ENCODE measurements at regions of chr5 and their contacts with region 1.

Region 1: GRCh38 chr5:170216266-170216864 is 16.4 kb upstream of the C5orf58 start:
- DNase-seq: peak; percentile 73
- H3K4me3 ChIP-seq: no peak overlapping the region
- H3K27ac ChIP-seq: no peak overlapping the region
- H3K4me1 ChIP-seq: peaks cover 30% of the 10 kb centered on the region
- H3K27me3 ChIP-seq: no peaks in the 10 kb centered on the region
- CTCF ChIP-seq: peak; percentile 66 to 69
- POLR2A ChIP-seq: no peak

Region 2: GRCh38 chr5:169302491-169303118 is 913.8 kb before region 1 on chr5:
- CTCF ChIA-PET with region 1: interaction called, 3 read pairs
- POLR2A ChIA-PET with region 1: no interaction called
- dilution Hi-C with region 1: no loop called
- intact Hi-C with region 1: loop called (anchors 5 kb)
- DNase-seq: peak; percentile 85
- H3K4me3 ChIP-seq: no peak overlapping the region
- H3K27ac ChIP-seq: no peak overlapping the region
- H3K4me1 ChIP-seq: peaks cover 4% of the 10 kb centered on the region
- H3K27me3 ChIP-seq: peaks cover 21 to 36% of the 10 kb centered on the region in 2 experiments
- CTCF ChIP-seq: peak; percentile 90 to 93
- POLR2A ChIP-seq: no peak

Region 3: GRCh38 chr5:169650701-169651331 is 565.5 kb before region 1 on chr5:
- CTCF ChIA-PET with region 1: no interaction called
- POLR2A ChIA-PET with region 1: no interaction called
- dilution Hi-C with region 1: no loop called
- intact Hi-C with region 1: no loop called
- DNase-seq: peak; percentile 65
- H3K4me3 ChIP-seq: no peak overlapping the region
- H3K27ac ChIP-seq: peak overlapping the region; percentile 37
- H3K4me1 ChIP-seq: peaks cover 13% of the 10 kb centered on the region
- H3K27me3 ChIP-seq: no peaks in the 10 kb centered on the region
- CTCF ChIP-seq: no peak
- POLR2A ChIP-seq: no peak

Region 4: GRCh38 chr5:169850409-169850808 is 366.0 kb before region 1 on chr5:
- CTCF ChIA-PET with region 1: no interaction called
- POLR2A ChIA-PET with region 1: no interaction called
- dilution Hi-C with region 1: no loop called
- intact Hi-C with region 1: loop called (anchors 10 kb)
- DNase-seq: no peak
- H3K4me3 ChIP-seq: no peak overlapping the region
- H3K27ac ChIP-seq: no peak overlapping the region
- H3K4me1 ChIP-seq: no peaks in the 10 kb centered on the region
- H3K27me3 ChIP-seq: no peaks in the 10 kb centered on the region
- CTCF ChIP-seq: peak; percentile 9 to 13
- POLR2A ChIP-seq: no peak

Region 5: DNA sequence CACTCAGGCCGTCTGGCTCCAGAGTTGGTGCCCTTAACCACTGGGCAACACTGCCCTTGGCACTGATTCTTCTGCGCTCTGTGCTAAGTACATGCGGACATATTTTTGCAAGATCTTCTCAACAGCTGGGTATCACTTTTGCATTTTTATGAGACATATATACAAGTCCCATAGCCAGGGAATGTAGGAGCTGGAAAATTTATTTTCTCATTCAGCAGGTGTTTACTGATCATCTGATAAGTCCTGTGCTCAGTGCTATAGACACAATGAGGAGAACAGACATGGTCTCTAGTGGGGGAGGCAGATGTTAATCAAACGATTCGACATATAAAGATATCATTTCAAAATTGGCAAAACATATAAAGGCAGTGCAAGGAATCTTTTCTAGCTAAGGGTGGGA is 198.6 kb before region 1 on chr5:
- CTCF ChIA-PET with region 1: no interaction called
- POLR2A ChIA-PET with region 1: no interaction called
- dilution Hi-C with region 1: no loop called
- intact Hi-C with region 1: no loop called
- DNase-seq: no peak
- H3K4me3 ChIP-seq: no peak overlapping the region
- H3K27ac ChIP-seq: no peak overlapping the region
- H3K4me1 ChIP-seq: no peaks in the 10 kb centered on the region
- H3K27me3 ChIP-seq: peaks cover 15 to 19% of the 10 kb centered on the region in 2 experiments
- CTCF ChIP-seq: no peak
- POLR2A ChIP-seq: no peak

Region 6: DNA sequence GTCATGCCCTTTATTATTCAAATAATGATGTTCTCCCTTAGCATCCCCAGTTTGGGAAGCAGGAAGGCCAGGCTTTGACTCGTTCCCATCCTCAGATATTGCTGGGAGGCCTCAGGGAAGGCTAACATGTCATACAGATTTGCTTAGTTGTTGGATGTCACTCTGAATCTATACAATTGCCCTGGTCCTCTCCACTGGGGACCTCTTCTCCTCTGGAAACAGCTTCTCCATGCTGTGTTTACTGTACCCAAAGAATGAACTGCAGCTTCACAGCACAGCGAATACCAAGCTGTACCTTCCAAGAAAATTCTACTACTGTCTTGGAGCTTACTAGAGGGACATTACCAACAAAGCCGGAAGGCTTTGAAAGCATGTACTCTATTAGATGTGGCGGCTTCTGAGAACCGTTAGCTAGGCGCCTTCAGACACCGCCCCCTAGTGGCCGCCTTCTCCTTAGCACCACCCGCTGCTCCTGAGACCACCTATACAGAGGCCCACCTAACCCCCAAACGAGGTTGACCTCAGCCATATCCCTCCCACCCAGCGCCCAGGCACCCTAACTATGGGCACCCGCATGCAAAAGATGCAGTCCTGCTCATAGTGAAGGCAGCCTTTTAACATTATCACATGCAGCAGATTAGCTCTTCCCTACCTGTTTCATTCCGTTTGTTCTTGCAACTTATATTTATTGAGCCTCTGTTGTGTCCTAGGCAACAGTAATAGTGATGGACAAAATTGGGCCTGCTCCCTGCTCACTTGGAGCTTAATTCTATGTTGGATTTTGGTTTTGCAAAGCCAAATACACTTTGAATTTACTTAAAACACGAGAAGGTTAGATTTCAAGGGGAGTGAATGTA is 145.6 kb before region 1 on chr5:
- CTCF ChIA-PET with region 1: interaction called, 24 read pairs
- POLR2A ChIA-PET with region 1: no interaction called
- dilution Hi-C with region 1: no loop called
- intact Hi-C with region 1: no loop called
- DNase-seq: peak; percentile 56
- H3K4me3 ChIP-seq: no peak overlapping the region
- H3K27ac ChIP-seq: no peak overlapping the region
- H3K4me1 ChIP-seq: peaks cover 11% of the 10 kb centered on the region
- H3K27me3 ChIP-seq: no peaks in the 10 kb centered on the region
- CTCF ChIP-seq: peak; percentile 62 to 91
- POLR2A ChIP-seq: no peak

Region 7: GRCh38 chr5:170151097-170151831 is 65.1 kb before region 1 on chr5:
- CTCF ChIA-PET with region 1: interaction called, 7 read pairs
- POLR2A ChIA-PET with region 1: no interaction called
- dilution Hi-C with region 1: no loop called
- intact Hi-C with region 1: loop called (anchors 1 kb)
- DNase-seq: peak; percentile 88
- H3K4me3 ChIP-seq: no peak overlapping the region
- H3K27ac ChIP-seq: peak overlapping the region; percentile 87
- H3K4me1 ChIP-seq: peaks cover 17% of the 10 kb centered on the region
- H3K27me3 ChIP-seq: no peaks in the 10 kb centered on the region
- CTCF ChIP-seq: no peak
- POLR2A ChIP-seq: no peak

Measured in endothelial cell of umbilical vein (primary cell).